Right ventricle myocardium inferior (tissue), 1 donor: ENCODE measurements at regions of chr1 and their contacts with region 1.

Region 1: GRCh38 chr1:88302843-88303486 is 381.1 kb upstream of the PKN2 start:
- DNase-seq: no peak
- ATAC-seq: no peak

Region 2: GRCh38 chr1:87292684-87293493 is 1010.1 kb before region 1 on chr1:
- intact Hi-C with region 1: loop called (anchors 10 kb)
- DNase-seq: no peak
- ATAC-seq: no peak

Region 3: DNA sequence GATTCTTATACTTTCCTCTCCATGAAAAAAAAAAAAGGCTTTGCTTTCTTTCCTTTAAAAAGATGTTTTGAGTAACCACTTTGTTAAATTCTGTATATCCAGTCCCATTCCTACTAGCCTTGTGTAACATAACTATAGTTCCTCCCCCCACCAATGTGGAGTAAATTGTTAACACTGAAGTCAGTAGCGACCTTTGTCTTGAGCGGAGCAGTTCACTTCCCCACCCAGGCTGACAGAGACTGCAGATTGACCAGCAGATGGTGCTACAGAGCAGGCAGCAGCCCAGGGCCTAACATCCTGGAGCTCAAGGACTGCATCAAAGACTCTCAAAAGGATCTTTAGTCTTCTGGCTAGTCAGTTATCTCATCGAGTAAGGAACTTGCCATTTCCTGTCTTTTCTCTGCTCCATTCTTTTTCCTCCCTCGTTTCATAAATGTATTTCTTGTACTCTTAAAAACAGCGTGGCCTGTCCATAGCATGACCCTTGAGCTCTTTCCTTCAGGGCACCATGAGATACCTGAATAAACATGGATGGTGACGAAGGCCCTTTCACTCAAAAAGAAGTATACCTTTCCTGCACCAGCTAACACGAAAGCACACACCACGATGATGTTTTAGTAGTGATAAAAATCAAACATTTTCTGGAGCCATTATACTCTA is 122.4 kb before region 1 on chr1:
- intact Hi-C with region 1: loop called (anchors 10 kb)
- DNase-seq: peak; percentile 69
- ATAC-seq: peak; percentile 91